Astrocyte of the cerebellum (primary cell): ENCODE measurements at regions of chr14 and their contacts with region 1.

Region 1: DNA sequence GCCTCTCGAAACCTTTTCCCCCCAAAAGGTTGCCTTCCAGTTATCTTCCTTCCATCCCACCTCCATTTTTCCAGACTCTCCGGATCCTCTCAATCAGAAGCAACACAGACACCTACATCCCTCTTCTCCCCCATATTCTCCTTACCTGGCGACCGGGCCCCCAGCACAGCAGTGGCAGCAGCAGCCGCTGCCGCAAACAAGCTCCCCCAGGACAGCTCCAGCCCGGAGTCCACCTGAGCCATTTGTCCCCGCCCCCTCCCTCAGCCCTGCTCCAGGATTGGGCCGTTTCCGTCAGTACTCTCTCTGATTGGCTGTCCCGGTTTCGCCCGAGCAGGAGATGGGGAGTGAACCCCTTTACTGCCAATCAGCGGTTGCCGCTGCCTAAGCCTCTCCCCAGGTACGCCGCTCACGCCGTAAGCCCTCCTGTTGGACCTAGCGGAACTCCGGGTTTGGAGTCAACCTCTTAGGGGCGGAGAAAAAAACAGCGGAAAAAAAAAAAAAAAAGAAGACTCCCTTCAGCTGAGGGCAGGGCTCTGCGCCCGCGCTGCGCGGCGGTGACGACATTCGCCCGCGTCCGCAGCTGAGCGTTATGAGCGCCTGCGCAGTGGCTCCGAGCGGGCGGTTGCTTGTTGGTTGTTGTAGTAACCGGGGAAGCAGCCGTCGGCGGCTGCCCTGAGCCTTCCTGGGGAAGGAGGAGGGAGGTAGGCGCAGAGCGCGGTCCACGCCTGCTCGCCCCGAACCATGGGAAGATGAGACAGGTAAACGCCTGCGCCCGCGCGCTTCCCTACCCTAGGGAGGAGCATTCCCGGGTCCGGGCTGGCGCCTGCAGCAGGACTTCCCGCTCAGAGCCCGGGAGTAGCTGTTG is at the starts of genes ERG28 and TTLL5:
- DNase-seq: peak; percentile 98
- H3K4me3 ChIP-seq: peak within 1 kb of the TSS; percentile 85
- CTCF ChIP-seq: no peak

Region 2: GRCh38 chr14:75278422-75279161 is 382.3 kb before region 1 on chr14 and contains the start of gene FOS:
- in situ Hi-C with region 1: no loop called
- DNase-seq: peak; percentile 89
- H3K4me3 ChIP-seq: peak within 1 kb of the TSS; percentile 97
- CTCF ChIP-seq: no peak

Region 3: GRCh38 chr14:75497191-75497590 is 163.7 kb before region 1 on chr14:
- in situ Hi-C with region 1: no loop called
- DNase-seq: no peak
- H3K4me3 ChIP-seq: no peak overlapping the region
- CTCF ChIP-seq: no peak

Region 4: DNA sequence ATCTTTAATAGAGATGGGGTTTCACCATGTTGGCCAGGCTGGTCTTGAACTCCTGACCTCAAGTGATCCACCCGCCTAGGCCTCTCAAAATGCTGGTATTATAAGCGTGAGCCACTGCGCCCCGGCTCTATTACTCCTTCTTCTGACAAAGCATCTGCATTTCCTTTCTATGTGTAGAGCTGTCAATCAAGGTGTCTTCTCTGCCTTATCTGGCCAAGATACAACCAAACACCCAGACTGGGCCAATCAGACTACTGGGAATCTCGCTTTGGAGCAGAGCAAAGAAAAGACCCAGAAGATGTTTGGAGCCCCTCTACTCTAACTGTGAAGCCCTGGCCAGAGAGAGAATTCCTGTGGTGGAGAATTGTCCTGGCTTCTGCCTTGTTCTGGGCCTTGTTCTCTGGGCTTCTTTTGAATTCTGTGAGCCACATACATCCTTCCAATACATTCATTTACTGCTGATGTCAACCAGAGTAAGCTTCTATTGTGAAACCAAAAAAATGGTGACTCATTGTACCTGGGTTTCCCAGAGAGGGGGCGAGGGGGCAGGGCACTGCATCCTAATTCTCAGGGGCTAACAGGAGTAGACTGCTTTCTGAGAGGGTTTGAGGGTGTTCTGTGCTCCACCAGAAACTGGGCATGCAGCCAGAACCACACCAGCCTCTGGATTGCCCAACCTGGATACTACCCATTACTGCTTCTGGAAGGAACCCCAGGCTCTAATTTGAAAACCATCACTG is 101.2 kb before region 1 on chr14:
- in situ Hi-C with region 1: no loop called
- DNase-seq: no peak
- H3K4me3 ChIP-seq: no peak overlapping the region
- CTCF ChIP-seq: no peak

Region 5: GRCh38 chr14:75570797-75571196 is 90.1 kb before region 1 on chr14:
- in situ Hi-C with region 1: loop called (anchors 5 kb)
- DNase-seq: no peak
- H3K4me3 ChIP-seq: no peak overlapping the region
- CTCF ChIP-seq: no peak

Region 6: DNA sequence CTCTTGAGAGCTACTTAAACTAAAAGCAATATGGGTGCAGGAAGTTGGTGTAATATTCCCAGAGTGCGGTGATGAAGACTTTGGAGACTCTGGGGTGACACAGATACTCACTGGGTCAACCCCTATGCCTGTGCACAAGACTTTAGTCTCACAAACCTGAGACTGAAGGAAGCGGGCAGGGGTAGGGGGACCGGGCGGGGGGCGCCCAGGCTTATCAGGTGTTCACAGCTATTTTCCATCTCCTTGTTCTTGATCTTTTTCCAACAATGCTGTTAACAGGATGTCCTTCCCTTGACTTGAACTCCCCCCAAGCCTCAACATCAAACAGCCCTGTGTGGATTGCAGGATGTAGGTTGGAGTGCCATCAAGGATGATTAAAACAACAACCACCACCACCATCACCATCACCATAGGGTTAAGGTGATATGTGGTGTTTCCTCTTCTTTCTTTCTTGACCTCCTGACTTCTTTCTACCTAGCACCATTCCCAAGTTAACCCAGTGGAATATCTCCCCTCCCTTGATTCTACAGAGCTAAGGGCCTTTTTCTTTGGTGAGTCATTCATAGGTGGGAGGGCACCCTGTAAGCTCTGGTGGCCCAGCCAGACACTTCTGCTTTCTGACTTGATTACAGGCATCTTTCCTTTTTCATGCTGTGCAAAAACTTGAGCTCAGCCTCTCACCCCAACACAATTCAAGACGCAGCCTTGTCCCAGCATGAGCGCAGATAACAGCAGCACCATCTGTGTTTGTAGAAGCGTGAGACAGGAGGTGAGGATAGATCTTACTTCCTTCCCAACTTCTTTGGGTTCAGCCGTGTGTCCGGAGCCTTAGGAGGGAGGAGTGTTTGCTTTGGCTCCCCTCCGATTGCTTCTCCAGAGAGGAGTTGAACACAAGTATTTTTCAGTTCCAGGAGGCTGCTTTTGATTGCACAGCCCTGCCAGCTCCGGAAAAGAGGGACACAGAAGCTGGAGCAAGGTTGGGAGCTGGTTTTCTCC is 55.7 kb before region 1 on chr14:
- in situ Hi-C with region 1: no loop called
- DNase-seq: no peak
- H3K4me3 ChIP-seq: no peak overlapping the region
- CTCF ChIP-seq: no peak